ENCODE measurements at regions of chr3 and their contacts with region 1.

Region 1: DNA sequence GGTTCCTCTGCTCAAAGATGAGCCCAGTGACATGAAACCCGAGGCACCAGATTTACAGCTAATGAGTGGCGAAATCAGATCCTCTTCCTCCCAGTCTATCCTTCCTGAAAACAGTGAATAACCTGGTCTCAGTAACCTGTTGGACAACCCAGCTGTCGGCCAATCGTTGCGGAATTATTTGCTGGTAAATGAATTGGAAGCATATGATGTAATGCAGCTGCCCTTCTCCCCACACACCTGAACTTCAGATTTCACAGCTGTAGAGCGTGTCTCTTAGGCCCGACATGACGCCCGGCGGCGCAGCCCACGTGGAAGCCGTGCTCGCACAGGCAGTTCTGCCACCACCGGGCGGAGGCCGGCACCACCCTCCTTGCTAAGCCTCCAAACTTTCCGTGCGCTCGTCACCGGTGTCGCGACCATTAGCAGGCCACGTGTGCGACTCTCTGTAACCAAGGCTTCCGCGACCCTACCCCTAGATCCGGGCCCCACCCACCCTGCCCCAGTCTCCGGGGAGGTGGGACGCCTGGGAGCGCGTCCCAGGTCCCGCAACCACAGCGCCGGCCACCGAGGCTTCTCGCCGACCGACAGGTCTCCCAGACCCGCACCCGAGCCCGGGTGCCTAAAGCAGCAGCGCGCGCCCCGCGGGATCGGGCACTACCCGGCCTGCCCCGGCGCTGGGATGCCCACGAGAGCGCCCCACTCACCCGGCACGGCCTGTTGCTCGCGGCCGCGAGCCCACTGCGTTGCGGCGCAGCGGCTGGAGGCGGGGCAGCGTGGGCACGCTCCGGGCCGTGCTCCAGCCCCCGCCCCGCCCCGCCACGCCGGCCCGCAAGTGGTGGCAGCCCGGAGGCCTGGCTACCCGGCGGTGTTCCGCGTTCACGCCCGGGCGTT is at the start of gene RIOX2:
- DNase-seq: peak; percentile 86
- H3K4me3 Mint-ChIP-seq: peak within 1 kb of the TSS; percentile 86
- H3K27ac Mint-ChIP-seq: peak within 1 kb of the TSS; percentile 93
- H3K4me1 Mint-ChIP-seq: peaks cover 77% of the 10 kb centered on the region
- H3K27me3 Mint-ChIP-seq: no peaks in the 10 kb centered on the region
- total RNA-seq, gene RIOX2: 46.5 to 46.7 TPM

Region 2: DNA sequence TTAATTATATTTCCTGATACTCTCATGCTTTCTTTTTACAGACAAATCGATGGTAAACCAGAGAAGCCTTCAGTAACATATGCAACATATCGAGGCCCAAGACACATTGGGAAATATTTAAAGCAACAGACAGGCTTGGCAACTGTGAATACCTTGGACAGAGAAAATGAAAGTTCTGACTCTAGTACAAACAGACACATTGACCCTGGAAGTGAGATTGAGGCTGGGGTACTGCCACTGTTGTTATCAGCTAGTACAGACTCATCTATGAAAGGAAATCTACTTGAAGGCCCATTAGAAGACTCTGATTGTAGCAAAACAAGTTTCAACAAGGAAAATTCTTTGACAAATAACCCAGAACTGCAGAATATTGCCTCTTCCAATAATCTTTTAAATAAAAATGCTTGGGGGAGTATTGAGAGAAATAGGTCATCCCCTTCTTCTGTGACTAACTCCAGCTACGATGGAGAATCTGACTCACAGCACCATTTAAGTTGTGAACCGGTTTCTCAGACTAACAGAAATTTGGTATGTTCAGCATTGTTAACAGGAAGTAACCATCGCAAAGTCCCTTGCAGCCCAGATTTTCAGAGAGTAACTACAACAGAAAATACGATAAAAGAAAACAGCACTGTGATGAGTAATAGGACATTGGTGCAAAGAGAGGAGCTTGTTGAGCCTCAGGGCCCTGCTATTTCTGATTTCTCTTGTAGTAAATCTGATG is 100.0 kb before region 1 on chr3:
- CTCF ChIA-PET with region 1: interaction called, 3 read pairs
- POLR2A ChIA-PET with region 1: interaction called, 10 read pairs
- DNase-seq: peak; percentile 41
- H3K4me3 Mint-ChIP-seq: peak overlapping the region; percentile 7
- H3K27ac Mint-ChIP-seq: peak overlapping the region; percentile 70
- H3K4me1 Mint-ChIP-seq: peaks cover 25% of the 10 kb centered on the region
- H3K27me3 Mint-ChIP-seq: no peaks in the 10 kb centered on the region

Measured in activated CD4-positive, alpha-beta memory T cell treated with anti-CD3 and anti-CD28 coated beads, Interleukin-2, amount 10 ng/mL, durations not matched to agents 7 days and 5 days (primary cell).